Dendritic cell treated with granulocyte-macrophage colony-stimulating factor and Interleukin-4, amounts not matched to agents 40 ng/mL and 50 ng/mL, for 4 days (primary cell): ENCODE measurements at regions of chr5 and their contacts with region 1.

Region 1: DNA sequence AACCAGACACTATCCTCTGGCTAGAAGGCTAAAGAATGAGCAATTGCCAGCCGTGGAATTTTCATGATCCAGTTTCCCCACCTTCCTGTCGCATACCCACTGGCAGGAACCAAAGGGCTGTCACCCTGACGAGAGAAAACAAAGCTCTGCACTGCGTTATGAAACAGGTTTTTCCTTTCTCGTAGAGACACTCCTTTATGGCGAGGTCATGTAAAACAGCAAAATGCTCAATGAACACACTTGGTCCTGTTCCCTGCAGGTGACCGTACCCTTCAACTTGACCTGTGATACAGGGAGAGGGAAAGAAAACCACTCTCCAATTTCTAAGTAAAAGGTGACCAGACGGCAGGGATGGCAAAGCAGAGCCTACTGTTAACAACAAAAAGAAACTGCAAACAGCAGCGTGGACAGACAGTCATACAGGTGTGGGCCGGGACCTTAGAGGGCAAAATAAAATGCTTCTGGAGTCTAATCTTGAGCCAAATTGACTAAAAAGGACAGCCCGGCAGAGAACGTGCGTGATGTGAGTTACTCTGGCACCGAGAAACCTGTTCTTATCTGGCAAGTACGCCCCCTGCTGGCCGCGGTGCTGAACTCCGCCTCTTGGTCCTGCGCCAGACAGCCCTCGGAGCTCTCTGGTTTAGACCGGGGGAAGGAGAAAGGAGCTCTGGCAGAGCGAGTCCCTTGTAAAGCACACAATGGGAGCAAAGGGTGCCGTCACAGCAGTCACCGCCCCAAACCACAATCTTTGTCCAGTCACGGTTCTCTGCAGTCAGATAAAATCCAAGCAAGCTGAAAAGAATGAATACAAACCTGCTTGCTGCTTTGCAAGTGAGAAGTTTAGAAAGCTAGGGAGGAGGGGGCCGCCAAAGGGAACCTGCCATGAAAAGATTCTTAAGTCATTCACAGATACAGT is 98.9 kb downstream of the EFNA5 start:
- H3K4me3 Mint-ChIP-seq: peak overlapping the region; percentile 63
- H3K27ac Mint-ChIP-seq: no peak overlapping the region
- H3K4me1 Mint-ChIP-seq: peaks cover 16% of the 10 kb centered on the region
- H3K27me3 Mint-ChIP-seq: peaks cover 11% of the 10 kb centered on the region

Region 2: DNA sequence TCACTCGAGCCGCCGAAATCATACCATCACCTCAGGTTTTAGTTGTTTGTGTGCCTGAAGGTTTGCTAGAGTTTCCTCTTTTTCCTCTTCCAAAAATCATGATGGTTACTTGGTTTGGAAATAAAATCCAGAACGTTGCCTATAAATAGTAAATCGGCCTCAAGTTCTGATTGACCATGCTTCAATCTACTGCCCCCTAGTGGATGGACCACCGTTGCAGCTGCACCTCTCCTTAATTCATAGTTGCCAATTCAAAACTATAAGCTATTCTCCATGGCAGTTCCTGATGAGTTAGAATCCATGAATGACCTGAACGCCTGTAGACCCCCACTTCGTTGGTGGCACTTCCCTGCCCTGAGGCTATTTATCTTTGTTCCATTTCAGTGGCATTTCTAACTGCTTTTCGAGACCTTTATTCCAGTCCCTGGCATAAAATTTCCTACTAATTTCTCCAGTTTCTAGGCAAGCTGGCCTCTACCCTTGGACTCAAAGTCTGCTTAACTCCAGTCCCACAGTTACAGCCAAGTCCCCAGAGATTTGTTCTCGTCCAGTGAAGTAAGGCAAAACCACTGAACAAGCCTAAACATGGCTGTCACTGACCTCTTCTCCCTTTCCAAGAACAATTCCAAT is 323.7 kb before region 1 on chr5:
- intact Hi-C with region 1: loop called (anchors 10 kb)
- H3K4me3 Mint-ChIP-seq: no peak overlapping the region
- H3K27ac Mint-ChIP-seq: no peak overlapping the region
- H3K4me1 Mint-ChIP-seq: no peaks in the 10 kb centered on the region
- H3K27me3 Mint-ChIP-seq: no peaks in the 10 kb centered on the region

Region 3: DNA sequence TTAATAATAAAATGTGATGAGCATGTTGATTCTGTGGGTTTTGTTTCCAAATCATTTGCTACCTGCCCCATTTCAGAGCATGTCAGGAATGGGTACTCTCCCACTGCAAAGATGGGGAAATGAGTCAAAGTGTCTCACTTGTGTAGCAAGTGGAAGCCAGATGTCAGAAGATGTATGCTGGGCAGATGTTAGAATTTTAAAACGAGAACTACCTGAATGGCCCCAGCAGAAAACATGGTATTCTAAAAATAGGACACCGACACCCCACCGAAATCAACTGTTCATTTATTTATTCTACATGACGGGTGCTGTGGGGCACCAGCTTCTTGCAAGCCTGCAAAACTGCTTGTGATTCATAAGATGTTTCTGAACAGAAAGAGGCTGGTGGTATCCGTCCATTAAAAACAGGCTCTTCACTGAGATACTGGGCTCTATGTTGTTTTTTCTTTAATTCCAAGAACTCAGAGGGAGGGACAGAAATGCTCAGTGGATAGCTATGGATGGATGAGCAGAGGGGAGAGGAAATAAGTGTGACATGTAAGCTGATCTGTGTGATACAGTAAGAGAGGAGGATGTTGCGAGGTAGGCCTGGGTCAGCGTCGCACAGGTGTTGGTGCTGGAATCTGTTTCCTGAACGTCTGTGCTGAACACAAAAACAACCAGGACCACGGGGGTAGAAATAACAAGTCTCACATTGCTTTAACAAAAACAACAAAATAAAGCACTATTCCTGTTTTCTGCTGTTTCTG is 58.4 kb before region 1 on chr5:
- intact Hi-C with region 1: no loop called
- H3K4me3 Mint-ChIP-seq: no peak overlapping the region
- H3K27ac Mint-ChIP-seq: no peak overlapping the region
- H3K4me1 Mint-ChIP-seq: no peaks in the 10 kb centered on the region
- H3K27me3 Mint-ChIP-seq: no peaks in the 10 kb centered on the region

Region 4: GRCh38 chr5:107557051-107557658 is 14.7 kb before region 1 on chr5:
- intact Hi-C with region 1: no loop called
- H3K4me3 Mint-ChIP-seq: no peak overlapping the region
- H3K27ac Mint-ChIP-seq: no peak overlapping the region
- H3K4me1 Mint-ChIP-seq: no peaks in the 10 kb centered on the region
- H3K27me3 Mint-ChIP-seq: peaks cover 1% of the 10 kb centered on the region